Mammary epithelial cell (primary cell): ENCODE measurements at regions of chr20 and their contacts with region 1.

Region 1: GRCh38 chr20:54293520-54293921 is 85.6 kb downstream of the PFDN4 start:
- DNase-seq: no peak
- H3K4me3 ChIP-seq: no peak overlapping the region
- H3K27ac ChIP-seq: no peak overlapping the region
- H3K4me1 ChIP-seq: no peaks in the 10 kb centered on the region
- H3K27me3 ChIP-seq: no peaks in the 10 kb centered on the region
- CTCF ChIP-seq: no peak

Region 2: GRCh38 chr20:54219751-54220426 is 73.6 kb before region 1 on chr20:
- CTCF ChIA-PET with region 1: no interaction called
- dilution Hi-C with region 1: no loop called
- in situ Hi-C with region 1: no loop called
- intact Hi-C with region 1: no loop called
- DNase-seq: peak; percentile 28
- H3K4me3 ChIP-seq: no peak overlapping the region
- H3K27ac ChIP-seq: no peak overlapping the region
- H3K4me1 ChIP-seq: peaks cover 4% of the 10 kb centered on the region
- H3K27me3 ChIP-seq: no peaks in the 10 kb centered on the region
- CTCF ChIP-seq: peak; percentile 51 to 66

Region 3: DNA sequence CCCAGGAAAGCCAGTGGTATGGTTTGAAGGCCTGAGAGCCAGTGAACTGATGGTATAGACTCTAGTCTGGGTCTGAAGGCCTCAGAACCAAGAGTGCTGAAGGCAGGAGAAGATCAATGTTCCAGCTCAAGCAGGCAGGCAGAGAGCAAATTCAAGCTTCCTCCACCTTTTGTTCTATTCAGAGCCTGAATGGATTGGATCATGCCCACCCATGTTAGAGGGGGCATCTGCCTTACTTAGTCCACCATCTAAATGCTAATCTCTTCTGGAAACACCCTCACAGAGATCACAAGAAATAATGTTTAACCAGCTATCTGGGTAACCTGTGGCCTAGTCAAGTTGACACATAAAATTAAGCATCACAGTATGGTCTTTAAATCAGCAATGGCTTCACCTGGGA is 47.0 kb before region 1 on chr20:
- CTCF ChIA-PET with region 1: no interaction called
- dilution Hi-C with region 1: loop called (anchors 5 kb)
- in situ Hi-C with region 1: no loop called
- intact Hi-C with region 1: no loop called
- DNase-seq: no peak
- H3K4me3 ChIP-seq: no peak overlapping the region
- H3K27ac ChIP-seq: no peak overlapping the region
- H3K4me1 ChIP-seq: no peaks in the 10 kb centered on the region
- H3K27me3 ChIP-seq: no peaks in the 10 kb centered on the region
- CTCF ChIP-seq: no peak